A549 (cell line): ENCODE measurements at regions of chr17 and their contacts with region 1.

Region 1: GRCh38 chr17:48307814-48308411 is 122.1 kb downstream of the SKAP1 start:
- DNase-seq: peak; percentile 58 to 78
- ATAC-seq: peak; percentile 96 to 98
- H3K4me3 ChIP-seq: no peak overlapping the region
- H3K27ac ChIP-seq: no peak overlapping the region
- H3K4me1 ChIP-seq: no peaks in the 10 kb centered on the region
- CTCF ChIP-seq: peak; percentile 89
- EP300 ChIP-seq: no peak
- POLR2A ChIP-seq: no peak
- RAD21 ChIP-seq: peak; percentile 69 to 76

Region 2: DNA sequence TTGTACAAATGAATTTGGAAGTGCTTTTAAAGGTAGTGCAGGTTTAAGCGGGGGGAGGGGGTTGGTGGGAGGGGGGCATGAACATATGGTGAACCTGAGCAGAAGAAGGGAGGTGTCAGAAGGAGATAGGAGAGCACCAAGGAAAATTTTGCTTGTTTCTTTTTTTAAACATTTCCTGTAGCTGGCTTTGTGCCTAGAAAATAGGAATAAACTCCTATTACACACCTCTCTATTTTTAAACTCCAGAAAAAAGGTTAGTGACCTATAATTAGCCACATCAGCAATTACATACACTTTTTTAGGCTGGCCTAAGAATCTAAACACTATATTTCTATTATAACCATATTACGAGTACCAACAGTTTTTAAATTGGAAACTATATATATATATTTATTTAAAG is 37.0 kb before region 1 on chr17:
- CTCF ChIA-PET with region 1: interaction called, 13 read pairs
- POLR2A ChIA-PET with region 1: no interaction called
- DNase-seq: no peak
- ATAC-seq: no peak
- H3K4me3 ChIP-seq: no peak overlapping the region
- H3K27ac ChIP-seq: no peak overlapping the region
- H3K4me1 ChIP-seq: peaks cover 17% of the 10 kb centered on the region
- CTCF ChIP-seq: no peak
- EP300 ChIP-seq: no peak
- POLR2A ChIP-seq: no peak
- RAD21 ChIP-seq: no peak

Region 3: DNA sequence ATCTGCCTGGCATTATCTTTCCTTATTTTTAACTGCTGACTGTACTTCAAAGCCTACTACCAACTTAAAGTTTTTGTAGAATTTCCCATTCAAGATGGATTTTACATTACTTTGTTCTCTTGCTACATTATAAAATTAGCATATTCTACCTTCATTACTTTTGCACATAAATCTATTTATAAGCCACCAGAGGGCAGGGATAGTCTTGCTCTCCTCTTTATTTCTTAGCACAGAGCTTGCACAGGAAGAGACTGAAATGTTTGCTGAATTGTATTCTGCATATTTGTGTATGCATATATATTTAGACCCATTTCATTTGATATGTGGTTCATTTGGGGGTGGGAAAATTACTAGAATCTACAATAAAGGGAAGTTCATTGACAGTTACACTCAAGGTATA is 14.1 kb after region 1 on chr17:
- CTCF ChIA-PET with region 1: interaction called, 24 read pairs
- POLR2A ChIA-PET with region 1: no interaction called
- DNase-seq: peak; percentile 15 to 30
- ATAC-seq: peak; percentile 44 to 54; a peak in 1 of 6 replicates
- H3K4me3 ChIP-seq: no peak overlapping the region
- H3K27ac ChIP-seq: no peak overlapping the region
- H3K4me1 ChIP-seq: no peaks in the 10 kb centered on the region
- CTCF ChIP-seq: 0 out of 3 replicates have a peak, but pooled peaks have one; percentile 19
- EP300 ChIP-seq: no peak
- POLR2A ChIP-seq: no peak
- RAD21 ChIP-seq: peak in 1 of 2 experiments; percentile 27; a peak in 2 of 5 replicates

Region 4: GRCh38 chr17:48335858-48336500 is 28.1 kb after region 1 on chr17:
- CTCF ChIA-PET with region 1: interaction called, 22 read pairs
- POLR2A ChIA-PET with region 1: no interaction called
- DNase-seq: peak; percentile 35 to 68
- ATAC-seq: peak; percentile 71 to 74; a peak in 5 of 6 replicates
- H3K4me3 ChIP-seq: no peak overlapping the region
- H3K27ac ChIP-seq: no peak overlapping the region
- H3K4me1 ChIP-seq: peaks cover 17% of the 10 kb centered on the region
- CTCF ChIP-seq: peak; percentile 94
- EP300 ChIP-seq: no peak
- POLR2A ChIP-seq: no peak
- RAD21 ChIP-seq: peak; percentile 75 to 79

Region 5: DNA sequence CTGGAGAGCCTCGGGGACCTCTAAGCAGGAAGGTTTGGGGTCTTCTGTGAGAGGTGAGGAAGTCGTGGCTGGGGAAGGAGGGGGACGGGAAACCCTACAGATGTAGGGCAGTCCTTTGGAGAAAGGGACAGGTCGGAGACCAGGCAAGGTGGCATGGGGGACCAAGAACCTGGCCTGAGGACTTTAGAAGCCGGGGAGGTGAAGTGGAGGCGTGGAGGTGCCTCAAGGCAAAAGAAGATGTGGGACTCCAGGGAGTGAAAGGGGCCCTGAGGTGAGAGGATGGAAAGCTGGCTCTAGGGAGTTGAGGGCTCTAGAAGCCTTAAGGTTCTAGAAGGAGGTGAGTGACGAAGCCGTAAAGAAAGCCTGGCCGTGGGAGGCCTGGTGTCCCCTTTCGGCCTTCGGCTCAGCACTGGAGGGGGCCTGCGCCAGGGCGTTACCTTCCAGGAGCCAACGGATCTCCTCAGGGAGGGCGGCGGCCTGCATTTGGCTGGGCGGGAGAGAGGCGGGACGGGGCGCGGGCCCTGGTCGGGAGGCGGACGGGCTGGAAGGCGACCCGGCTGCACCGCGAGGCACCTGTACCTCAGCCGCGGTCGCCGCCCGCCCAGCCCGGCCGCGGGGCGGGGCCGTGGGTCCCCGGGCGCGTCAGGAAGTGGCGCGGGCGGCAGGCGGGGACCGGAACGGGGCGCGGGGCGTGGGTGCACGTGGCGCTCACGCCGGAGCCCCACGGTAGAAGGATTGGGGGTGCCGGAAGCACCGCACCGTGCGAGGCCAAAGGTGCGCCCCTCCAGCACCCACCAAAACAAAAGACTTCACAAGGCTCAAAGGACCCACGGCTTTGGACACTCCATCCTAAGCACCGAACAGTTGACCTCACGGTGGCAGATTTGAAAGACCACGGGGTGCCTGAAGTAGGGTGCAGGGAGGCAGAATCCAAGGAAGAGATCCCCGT is 122.0 kb after region 1 on chr17 and contains the start of gene SKAP1:
- CTCF ChIA-PET with region 1: no interaction called
- POLR2A ChIA-PET with region 1: no interaction called
- DNase-seq: no peak
- ATAC-seq: peak; percentile 9 to 27; a peak in 3 of 6 replicates
- H3K4me3 ChIP-seq: peak within 1 kb of the TSS; percentile 32
- H3K27ac ChIP-seq: 0 out of 6 replicates have a peak within 1 kb of the TSS, but pooled peaks of 1 of the 2 experiments have one; percentile 28
- H3K4me1 ChIP-seq: no peaks in the 10 kb centered on the region
- CTCF ChIP-seq: no peak
- EP300 ChIP-seq: no peak
- POLR2A ChIP-seq: no peak
- RAD21 ChIP-seq: no peak
- polyA plus RNA-seq, gene SKAP1: 0.77 and 0.78 TPM in 2 replicates

Region 6: DNA sequence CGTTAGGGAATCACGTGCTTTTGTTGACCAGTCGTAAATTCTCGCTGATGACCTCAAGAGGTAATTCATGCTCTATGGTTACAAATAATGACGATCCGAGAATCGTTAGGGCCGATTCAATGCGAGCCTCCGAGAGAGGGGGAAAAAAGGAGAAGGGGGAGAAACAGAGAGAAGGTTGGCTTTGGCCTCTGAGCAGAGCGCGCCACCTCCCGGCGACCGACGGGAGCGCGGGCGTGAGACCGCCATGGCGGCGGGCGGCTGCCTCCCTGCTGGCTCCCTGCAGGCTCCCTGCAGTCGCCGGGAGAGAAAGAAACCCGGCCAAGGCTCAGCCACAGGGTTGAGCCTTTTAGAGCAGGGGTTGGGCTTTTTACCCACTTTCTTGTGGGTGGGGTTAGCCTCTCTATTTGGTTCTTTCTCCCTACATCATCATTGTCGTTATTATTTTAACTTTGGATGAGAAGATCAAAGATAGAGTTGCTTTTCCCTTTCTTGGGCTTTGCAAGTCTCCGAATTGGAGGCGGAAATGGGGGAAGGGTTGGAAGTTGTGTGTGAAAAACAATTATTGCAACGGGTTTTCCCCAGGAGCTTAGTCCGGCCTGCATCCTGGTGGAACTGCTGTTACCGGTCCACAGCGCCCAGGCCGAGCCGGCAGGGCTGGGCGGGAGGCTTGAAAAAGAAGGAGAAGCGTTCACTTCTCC is 286.1 kb after region 1 on chr17:
- CTCF ChIA-PET with region 1: interaction called, 19 read pairs
- POLR2A ChIA-PET with region 1: no interaction called
- DNase-seq: peak; percentile 81 to 94
- ATAC-seq: peak; percentile 74 to 92
- H3K4me3 ChIP-seq: peak overlapping the region; percentile 22; the same call in 2 of the 3 replicates
- H3K27ac ChIP-seq: peak overlapping the region in 1 of 2 experiments; percentile 60; a peak in 4 of 6 replicates
- H3K4me1 ChIP-seq: peaks cover 5% of the 10 kb centered on the region
- CTCF ChIP-seq: peak; percentile 99
- EP300 ChIP-seq: no peak
- POLR2A ChIP-seq: no peak
- RAD21 ChIP-seq: peak; percentile 91 to 94